WTC11 (cell line): ENCODE measurements at regions of chr7 and their contacts with region 1.

Region 1: DNA sequence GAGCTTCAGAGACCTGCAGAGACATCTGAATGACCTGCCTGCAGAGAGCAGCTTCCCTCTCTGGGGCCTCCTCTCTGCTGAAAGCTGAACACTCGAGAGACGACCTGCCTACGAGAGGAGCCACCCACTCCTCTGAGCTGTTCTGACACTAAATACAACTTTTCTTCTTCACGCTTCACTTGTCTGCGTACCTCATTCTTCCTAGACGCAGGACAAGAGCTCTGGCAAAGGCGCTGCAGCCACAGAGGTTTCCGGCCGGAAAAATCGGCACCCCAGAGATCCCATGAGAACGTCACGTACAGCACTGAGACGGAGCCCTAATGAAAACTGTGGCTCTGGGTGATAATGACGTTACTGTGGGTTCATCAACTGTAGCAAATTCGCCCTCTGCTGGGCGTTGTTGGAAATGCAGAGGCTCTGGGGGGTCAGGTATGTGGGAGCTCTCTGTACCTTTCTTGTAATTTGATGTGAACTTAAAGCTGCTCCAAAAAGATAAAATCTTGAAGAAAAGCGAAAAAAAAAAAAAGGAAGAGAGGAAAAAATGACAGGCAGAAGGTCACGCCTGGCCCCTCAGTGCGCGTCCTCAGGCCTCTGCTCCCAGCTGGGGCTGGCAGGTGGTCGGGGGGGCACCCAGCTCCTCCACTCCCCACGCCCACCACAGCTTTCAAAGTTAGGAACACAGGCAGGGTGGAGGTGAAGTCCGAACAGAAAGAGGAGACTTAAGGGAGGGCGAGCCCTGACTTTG is 120.7 kb downstream of the DYNC2I1 start:
- DNase-seq: peak; percentile 94
- ATAC-seq: peak; percentile 77
- H3K4me3 Mint-ChIP-seq: peak overlapping the region; percentile 55
- H3K27ac Mint-ChIP-seq: 0 out of 2 replicates have a peak overlapping the region, but pooled peaks have one; percentile 86
- H3K4me1 Mint-ChIP-seq: peaks cover 20% of the 10 kb centered on the region
- H3K27me3 Mint-ChIP-seq: peaks cover 5% of the 10 kb centered on the region; the same call in 1 of the 2 replicates
- CTCF ChIP-seq: peak; percentile 94

Region 2: GRCh38 chr7:158858592-158859503 is 118.2 kb before region 1 on chr7:
- CTCF ChIA-PET with region 1: interaction called, 16 read pairs
- POLR2A ChIA-PET with region 1: interaction called, 3 read pairs
- DNase-seq: peak; percentile 33
- ATAC-seq: no peak
- H3K4me3 Mint-ChIP-seq: peak overlapping the region; percentile 68
- H3K27ac Mint-ChIP-seq: peak overlapping the region; percentile 99
- H3K4me1 Mint-ChIP-seq: peaks cover 55% of the 10 kb centered on the region
- H3K27me3 Mint-ChIP-seq: no peaks in the 10 kb centered on the region
- CTCF ChIP-seq: no peak

Region 3: DNA sequence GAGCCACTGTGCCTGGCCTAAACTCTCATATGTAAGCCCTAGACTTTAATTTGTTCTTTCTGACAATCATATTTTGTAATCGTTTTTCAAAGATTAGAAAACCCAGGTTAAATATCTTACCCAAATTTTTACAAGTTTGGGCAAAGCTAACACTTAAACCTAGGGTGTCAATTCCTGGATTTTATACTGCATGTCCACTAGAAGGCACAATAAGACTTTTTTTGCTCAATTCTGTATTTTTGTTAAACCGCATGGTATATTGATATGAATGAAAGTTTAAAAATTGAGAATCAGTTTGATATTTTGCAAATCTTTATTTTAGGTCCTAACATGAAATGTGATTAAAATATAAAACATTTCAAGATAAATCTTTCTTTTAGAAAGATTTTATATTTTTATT is 91.4 kb before region 1 on chr7:
- CTCF ChIA-PET with region 1: interaction called, 15 read pairs
- POLR2A ChIA-PET with region 1: no interaction called
- DNase-seq: no peak
- ATAC-seq: no peak
- H3K4me3 Mint-ChIP-seq: no peak overlapping the region
- H3K27ac Mint-ChIP-seq: no peak overlapping the region
- H3K4me1 Mint-ChIP-seq: no peaks in the 10 kb centered on the region
- H3K27me3 Mint-ChIP-seq: no peaks in the 10 kb centered on the region
- CTCF ChIP-seq: no peak

Region 4: GRCh38 chr7:158991824-158992583 is 15.0 kb after region 1 on chr7:
- CTCF ChIA-PET with region 1: interaction called, 31 read pairs
- POLR2A ChIA-PET with region 1: no interaction called
- DNase-seq: no peak
- ATAC-seq: peak; percentile 28; the same call in 1 of the 2 replicates
- H3K4me3 Mint-ChIP-seq: peak overlapping the region; percentile 49
- H3K27ac Mint-ChIP-seq: no peak overlapping the region
- H3K4me1 Mint-ChIP-seq: peaks cover 6% of the 10 kb centered on the region; the same call in 1 of the 2 replicates
- H3K27me3 Mint-ChIP-seq: peaks cover 64% of the 10 kb centered on the region
- CTCF ChIP-seq: no peak

Region 5: DNA sequence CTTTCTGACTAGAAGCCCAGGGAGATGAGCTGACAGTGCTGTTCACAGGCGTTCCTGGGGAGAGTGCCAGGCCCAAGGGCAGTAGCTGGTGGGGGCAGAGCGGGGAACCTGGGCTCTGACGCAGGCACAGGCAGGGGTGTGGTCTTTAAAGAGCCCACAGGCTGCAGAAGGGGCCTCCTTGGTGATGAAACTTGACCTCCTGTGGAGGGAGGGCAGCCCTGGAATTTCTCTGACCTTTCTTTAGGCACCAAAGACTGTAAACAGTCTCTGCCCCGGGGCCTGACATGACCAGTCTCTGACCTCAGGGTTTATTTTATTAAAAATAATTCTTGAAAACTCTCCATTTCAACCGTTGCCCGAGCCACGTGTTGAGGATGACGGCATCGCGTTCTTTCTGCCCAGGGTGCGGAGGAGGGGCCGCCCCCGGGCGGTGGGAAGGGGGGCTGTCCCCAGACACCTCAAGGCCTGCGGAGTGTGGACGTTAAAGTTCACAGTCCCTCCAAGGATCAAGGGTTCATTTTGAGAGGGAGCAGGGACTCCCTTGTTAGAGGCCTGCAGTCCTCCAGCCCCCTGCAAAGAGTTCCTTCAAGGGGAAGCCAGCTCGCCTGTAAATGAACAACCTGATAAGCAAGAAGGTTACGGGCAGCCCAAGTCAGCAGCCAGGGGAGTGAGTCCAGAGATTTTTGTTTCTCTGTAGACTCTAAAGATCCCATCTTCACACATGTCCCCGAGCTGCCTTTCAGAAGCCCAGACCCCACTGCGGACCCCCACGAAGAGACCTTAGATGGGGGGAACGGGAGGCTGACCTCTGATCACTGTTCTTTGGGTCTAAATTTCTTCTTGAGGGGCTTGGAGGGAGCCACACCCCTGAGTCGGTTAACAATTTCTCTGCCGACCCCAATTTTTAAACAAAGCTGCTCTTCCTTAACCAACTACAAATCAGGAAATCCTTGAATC is 38.7 kb after region 1 on chr7:
- CTCF ChIA-PET with region 1: interaction called, 11 read pairs
- POLR2A ChIA-PET with region 1: no interaction called
- DNase-seq: no peak
- ATAC-seq: peak; percentile 72
- H3K4me3 Mint-ChIP-seq: no peak overlapping the region
- H3K27ac Mint-ChIP-seq: no peak overlapping the region
- H3K4me1 Mint-ChIP-seq: peaks cover 20% of the 10 kb centered on the region
- H3K27me3 Mint-ChIP-seq: no peaks in the 10 kb centered on the region
- CTCF ChIP-seq: no peak

Region 6: GRCh38 chr7:159192013-159192412 is 215.0 kb after region 1 on chr7:
- CTCF ChIA-PET with region 1: interaction called, 11 read pairs
- POLR2A ChIA-PET with region 1: no interaction called
- DNase-seq: no peak
- ATAC-seq: peak; percentile 85
- H3K4me3 Mint-ChIP-seq: no peak overlapping the region
- H3K27ac Mint-ChIP-seq: no peak overlapping the region
- H3K4me1 Mint-ChIP-seq: peaks cover 35% of the 10 kb centered on the region
- H3K27me3 Mint-ChIP-seq: no peaks in the 10 kb centered on the region; the same call in 1 of the 2 replicates
- CTCF ChIP-seq: no peak